Heart right ventricle (tissue), 16 donors: ENCODE measurements at regions of chr4 and their contacts with region 1.

Region 1: GRCh38 chr4:1167247-1167949 is 5.0 kb downstream of the SPON2 start:
- DNase-seq: peak; percentile 76 to 83
- ATAC-seq: peak; percentile 80 to 92 (median 86)
- H3K4me3 ChIP-seq: peak overlapping the region; percentile 12 to 79 (median 62)
- H3K27ac ChIP-seq: peak overlapping the region in 2 of 10 donors; percentile 29 to 80
- H3K4me1 ChIP-seq: peaks cover 5 to 44% (median 27%) of the 10 kb centered on the region in 9 donors
- H3K27me3 ChIP-seq: peaks cover 9 to 39% (median 29%) of the 10 kb centered on the region in 7 donors
- CTCF ChIP-seq: peak; percentile 84 to 96 (median 93)

Region 2: GRCh38 chr4:1130316-1131186 is 36.8 kb before region 1 on chr4:
- intact Hi-C with region 1: loop called in 1 of 10 experiments (anchors 1 kb)
- DNase-seq: peak; percentile 49 to 56
- ATAC-seq: peak; percentile 90 to 96 (median 95)
- H3K4me3 ChIP-seq: no peak overlapping the region
- H3K27ac ChIP-seq: no peak overlapping the region
- H3K4me1 ChIP-seq: peaks cover 0 to 6% (median 0%) of the 10 kb centered on the region in 9 donors
- H3K27me3 ChIP-seq: peaks cover 0 to 24% (median 5%) of the 10 kb centered on the region in 7 donors
- CTCF ChIP-seq: peak; percentile 97 to 100 (median 99)

Region 3: GRCh38 chr4:1207603-1208265 is 40.3 kb after region 1 on chr4:
- intact Hi-C with region 1: loop called in 5 of 10 experiments (anchors 5 kb)
- DNase-seq: peak in 1 of 2 donors; percentile 75
- ATAC-seq: peak; percentile 12 to 59 (median 37)
- H3K4me3 ChIP-seq: peak overlapping the region in 5 of 10 donors; percentile 2 to 28 (median 11)
- H3K27ac ChIP-seq: peak overlapping the region; percentile 57 to 81 (median 70)
- H3K4me1 ChIP-seq: peaks cover 26 to 56% (median 49%) of the 10 kb centered on the region in 9 donors
- H3K27me3 ChIP-seq: no peaks in the 10 kb centered on the region
- CTCF ChIP-seq: no peak

Region 4: DNA sequence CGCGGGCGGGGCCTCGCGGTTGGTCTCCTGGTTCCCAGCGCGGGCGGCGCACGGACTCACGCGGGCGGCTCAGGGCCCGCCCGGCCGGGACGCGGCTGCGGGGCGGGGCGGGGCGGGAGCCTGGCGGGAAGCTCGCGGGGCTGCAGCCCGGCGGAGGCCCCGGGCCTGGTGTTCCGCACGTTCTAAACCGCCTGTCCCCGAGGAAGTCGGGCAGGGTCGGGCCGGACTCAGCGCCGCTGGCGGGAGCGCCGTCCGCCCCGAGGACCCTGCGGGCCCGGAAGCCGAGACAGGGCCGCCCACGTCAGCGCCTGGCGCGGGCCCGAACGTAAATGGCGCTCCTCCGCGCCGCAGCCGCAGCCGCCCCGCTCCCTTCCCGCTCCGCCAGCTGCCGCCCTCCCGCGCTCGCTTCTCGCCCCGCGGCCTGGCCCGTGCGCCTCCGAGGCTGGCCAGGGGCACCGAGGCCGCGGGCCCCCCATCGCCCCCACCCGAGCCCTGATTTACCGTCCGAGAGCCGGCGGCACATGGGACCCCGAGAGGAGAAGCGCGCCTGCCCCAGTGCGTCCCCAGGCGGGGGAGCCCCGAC is 81.8 kb after region 1 on chr4:
- intact Hi-C with region 1: loop called in 8 of 10 experiments (anchors 2 to 5 kb)
- DNase-seq: peak; percentile 85 to 89
- ATAC-seq: peak; percentile 40 to 75 (median 66)
- H3K4me3 ChIP-seq: peak overlapping the region; percentile 45 to 86 (median 78)
- H3K27ac ChIP-seq: peak overlapping the region; percentile 91 to 99 (median 98)
- H3K4me1 ChIP-seq: peaks cover 43 to 60% (median 51%) of the 10 kb centered on the region in 9 donors
- H3K27me3 ChIP-seq: no peaks in the 10 kb centered on the region
- CTCF ChIP-seq: peak in 1 of 9 donors; percentile 17

Region 5: DNA sequence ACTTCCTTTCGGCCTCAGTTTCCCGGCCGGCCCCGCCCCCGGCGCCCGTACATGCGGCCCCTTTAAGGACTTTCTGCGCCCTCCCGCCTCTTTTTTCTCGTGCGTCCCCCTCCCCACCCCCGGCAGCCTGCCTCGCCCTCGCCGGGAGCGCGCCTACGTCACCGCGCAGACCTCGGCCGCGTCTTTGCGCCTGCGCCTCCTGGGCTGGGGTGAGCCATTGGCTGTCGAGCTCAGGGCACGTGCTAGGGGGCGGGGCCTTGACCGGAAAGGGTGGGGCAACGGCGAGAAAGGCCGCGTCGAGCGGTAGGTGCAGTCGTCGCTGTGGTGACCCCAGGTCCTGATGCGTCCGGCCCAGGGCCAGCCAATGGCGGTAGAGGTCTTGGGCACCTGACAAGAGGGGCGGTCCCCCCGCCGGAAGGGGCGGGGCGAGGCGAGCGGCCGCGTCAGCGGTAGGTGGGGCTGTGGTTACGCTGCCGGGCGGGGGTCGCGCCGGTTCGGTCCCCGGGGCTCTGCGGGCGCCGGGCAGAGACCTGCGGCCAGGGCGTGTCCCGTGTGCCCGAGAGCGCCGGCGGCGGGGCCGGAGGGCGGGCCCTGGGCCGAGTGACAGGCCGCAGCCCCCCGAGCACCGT is 179.5 kb after region 1 on chr4 and contains the start of gene UVSSA:
- intact Hi-C with region 1: loop called in 6 of 10 experiments (anchors 10 kb)
- DNase-seq: peak; percentile 100
- ATAC-seq: peak; percentile 93 to 99 (median 97)
- H3K4me3 ChIP-seq: peak within 1 kb of the TSS; percentile 75 to 97 (median 90)
- H3K27ac ChIP-seq: peak within 1 kb of the TSS; percentile 94 to 100 (median 98)
- H3K4me1 ChIP-seq: peaks cover 7 to 38% (median 21%) of the 10 kb centered on the region in 9 donors
- H3K27me3 ChIP-seq: no peaks in the 10 kb centered on the region
- CTCF ChIP-seq: no peak
- total RNA-seq, gene UVSSA: 5.2 to 8.3 (median 6.6) TPM